ENCODE measurements at regions of chr13 and their contacts with region 1.

Region 1: DNA sequence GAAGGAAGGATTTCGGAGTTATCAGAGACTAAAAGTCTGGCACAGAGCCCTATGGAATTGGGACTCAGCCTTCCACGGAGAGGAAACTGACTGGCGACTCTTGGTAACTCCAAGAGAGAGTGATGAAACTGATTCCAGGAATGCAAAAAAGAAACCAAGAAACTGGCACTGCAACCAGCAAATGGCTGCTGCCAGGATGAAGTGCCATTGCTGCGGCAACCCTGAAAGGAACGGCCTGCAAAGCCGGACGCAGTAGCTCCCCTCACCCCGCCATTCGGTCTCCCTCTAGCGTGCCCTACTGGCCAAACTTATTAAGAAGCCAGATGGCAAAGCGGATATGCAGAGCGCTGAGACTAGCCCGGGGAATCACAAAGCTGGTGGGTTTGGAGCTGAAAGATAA is 236.0 kb downstream of the PCDH9 start:
- DNase-seq: peak; percentile 66
- H3K4me3 ChIP-seq: peak overlapping the region; percentile 18 to 38 (median 23)
- H3K27ac ChIP-seq: no peak overlapping the region
- H3K4me1 ChIP-seq: peaks cover 18% of the 10 kb centered on the region
- H3K27me3 ChIP-seq: no peaks in the 10 kb centered on the region
- CTCF ChIP-seq: peak; percentile 77 to 93

Region 2: DNA sequence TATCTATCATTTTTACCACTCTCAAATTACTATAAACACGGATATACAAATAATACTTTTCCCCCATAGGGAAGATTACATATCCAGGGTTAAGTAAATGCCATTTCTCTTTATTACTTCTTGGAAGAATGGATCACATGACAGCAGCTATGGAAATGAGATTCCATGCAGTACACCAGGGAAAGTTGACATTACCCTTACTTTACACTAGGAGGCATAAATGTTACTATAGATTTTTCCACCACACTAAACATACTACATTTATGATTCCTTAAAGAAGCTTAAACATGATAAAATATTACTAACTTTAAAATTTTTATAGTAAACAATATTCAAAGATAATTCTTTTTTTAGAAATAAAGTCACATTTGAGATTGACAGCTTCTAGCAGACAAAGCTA is 375.4 kb before region 1 on chr13:
- CTCF ChIA-PET with region 1: interaction called, 4 read pairs
- dilution Hi-C with region 1: no loop called
- in situ Hi-C with region 1: no loop called
- intact Hi-C with region 1: loop called (anchors 5 kb)
- DNase-seq: peak; percentile 14
- H3K4me3 ChIP-seq: no peak overlapping the region
- H3K27ac ChIP-seq: no peak overlapping the region
- H3K4me1 ChIP-seq: no peaks in the 10 kb centered on the region
- H3K27me3 ChIP-seq: no peaks in the 10 kb centered on the region
- CTCF ChIP-seq: peak; percentile 50 to 64

Region 3: GRCh38 chr13:66926851-66927524 is 67.1 kb before region 1 on chr13:
- CTCF ChIA-PET with region 1: no interaction called
- dilution Hi-C with region 1: no loop called
- in situ Hi-C with region 1: no loop called
- intact Hi-C with region 1: loop called (anchors 5 kb)
- DNase-seq: peak; percentile 87
- H3K4me3 ChIP-seq: no peak overlapping the region
- H3K27ac ChIP-seq: peak overlapping the region; percentile 72
- H3K4me1 ChIP-seq: peaks cover 21% of the 10 kb centered on the region
- H3K27me3 ChIP-seq: no peaks in the 10 kb centered on the region
- CTCF ChIP-seq: peak in 1 of 2 donors; percentile 42

Region 4: GRCh38 chr13:66974174-66974573 is 19.9 kb before region 1 on chr13:
- CTCF ChIA-PET with region 1: interaction called, 10 read pairs
- dilution Hi-C with region 1: no loop called
- in situ Hi-C with region 1: no loop called
- intact Hi-C with region 1: no loop called
- DNase-seq: no peak
- H3K4me3 ChIP-seq: no peak overlapping the region
- H3K27ac ChIP-seq: no peak overlapping the region
- H3K4me1 ChIP-seq: no peaks in the 10 kb centered on the region
- H3K27me3 ChIP-seq: peaks cover 2% of the 10 kb centered on the region
- CTCF ChIP-seq: no peak